Activated naive CD4-positive, alpha-beta T cell treated with anti-CD3 and anti-CD28 coated beads for 36 hours (primary cell): ENCODE measurements at regions of chr1 and their contacts with region 1.

Region 1: DNA sequence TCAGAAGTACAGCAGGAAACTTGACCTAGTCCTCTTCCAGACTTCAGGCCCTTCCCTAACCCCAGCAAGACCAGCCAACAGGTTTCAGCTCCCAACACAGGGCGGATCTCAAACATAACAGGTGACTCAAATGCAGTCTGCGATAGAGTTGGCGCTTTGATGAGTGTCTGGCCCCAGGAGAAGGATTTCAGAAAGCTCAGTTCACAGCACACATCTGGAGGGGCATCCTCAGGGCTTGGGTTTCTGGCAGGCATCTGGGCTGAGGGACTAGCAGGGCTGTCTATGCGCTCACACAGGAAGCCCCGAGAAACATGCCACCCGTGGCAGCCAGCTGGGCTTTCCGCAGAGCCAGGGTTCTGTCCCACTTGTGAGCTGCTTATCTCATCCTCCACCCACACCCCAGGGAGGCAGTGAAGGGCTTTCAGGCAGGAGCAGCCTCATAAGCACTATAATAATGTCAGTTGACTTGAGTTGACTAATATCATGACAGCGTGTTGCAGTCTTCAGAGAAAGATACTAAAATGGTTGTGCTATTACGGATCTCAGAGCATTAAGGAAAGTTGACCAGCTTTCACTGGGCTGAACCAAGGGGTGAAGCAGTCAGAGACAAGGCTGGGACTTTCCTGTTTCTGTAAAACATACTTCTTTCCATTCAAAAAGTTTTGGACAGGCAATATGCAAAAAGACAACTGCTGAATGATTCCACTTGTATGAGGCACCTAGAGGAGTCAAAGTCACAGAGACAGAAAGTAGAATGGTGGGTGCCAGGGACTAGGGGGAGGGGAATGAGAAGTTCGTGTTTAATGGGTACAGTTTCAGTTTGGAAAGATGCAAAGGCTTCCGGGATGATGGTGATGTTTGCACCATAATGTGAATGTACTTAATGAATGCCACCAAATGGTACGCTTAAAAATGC is 233.0 kb upstream of the IRF2BP2 start:
- DNase-seq: peak; percentile 95
- H3K4me3 Mint-ChIP-seq: peak overlapping the region; percentile 62
- H3K27ac Mint-ChIP-seq: peak overlapping the region; percentile 96
- H3K4me1 Mint-ChIP-seq: peaks cover 85% of the 10 kb centered on the region
- H3K27me3 Mint-ChIP-seq: no peaks in the 10 kb centered on the region

Region 2: DNA sequence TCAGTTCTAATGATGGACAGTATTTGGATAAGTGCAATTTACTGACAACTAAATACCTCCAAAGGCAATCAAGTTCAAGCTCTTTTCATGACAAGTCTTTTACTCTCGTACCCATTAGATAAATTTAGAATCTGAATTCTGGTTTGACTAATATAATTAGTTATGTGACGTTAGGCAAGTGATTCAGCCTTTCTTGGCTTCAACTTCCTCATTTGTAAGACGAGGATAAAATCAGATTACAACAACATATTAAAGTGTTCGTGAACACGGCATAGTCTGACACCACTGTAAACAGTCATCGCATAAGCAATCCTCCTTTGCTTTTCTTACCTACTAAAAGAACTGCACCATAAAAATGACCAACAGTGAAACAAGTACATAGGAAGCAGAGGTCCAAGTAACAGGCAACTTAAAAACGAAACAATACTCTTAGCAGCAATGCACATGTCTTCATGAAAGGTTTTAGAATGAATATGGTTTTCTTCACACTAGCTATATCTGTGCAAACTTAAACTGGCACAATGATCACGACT is 444.1 kb before region 1 on chr1:
- CTCF ChIA-PET with region 1: no interaction called
- intact Hi-C with region 1: loop called (anchors 10 kb)
- DNase-seq: peak; percentile 23
- H3K4me3 Mint-ChIP-seq: peak overlapping the region; percentile 60
- H3K27ac Mint-ChIP-seq: peak overlapping the region; percentile 91
- H3K4me1 Mint-ChIP-seq: peaks cover 58% of the 10 kb centered on the region
- H3K27me3 Mint-ChIP-seq: no peaks in the 10 kb centered on the region

Region 3: GRCh38 chr1:234599617-234600417 is 243.2 kb before region 1 on chr1:
- CTCF ChIA-PET with region 1: no interaction called
- intact Hi-C with region 1: loop called (anchors 1 kb)
- DNase-seq: peak; percentile 74
- H3K4me3 Mint-ChIP-seq: peak overlapping the region; percentile 83
- H3K27ac Mint-ChIP-seq: peak overlapping the region; percentile 99
- H3K4me1 Mint-ChIP-seq: peaks cover 50% of the 10 kb centered on the region
- H3K27me3 Mint-ChIP-seq: no peaks in the 10 kb centered on the region

Region 4: DNA sequence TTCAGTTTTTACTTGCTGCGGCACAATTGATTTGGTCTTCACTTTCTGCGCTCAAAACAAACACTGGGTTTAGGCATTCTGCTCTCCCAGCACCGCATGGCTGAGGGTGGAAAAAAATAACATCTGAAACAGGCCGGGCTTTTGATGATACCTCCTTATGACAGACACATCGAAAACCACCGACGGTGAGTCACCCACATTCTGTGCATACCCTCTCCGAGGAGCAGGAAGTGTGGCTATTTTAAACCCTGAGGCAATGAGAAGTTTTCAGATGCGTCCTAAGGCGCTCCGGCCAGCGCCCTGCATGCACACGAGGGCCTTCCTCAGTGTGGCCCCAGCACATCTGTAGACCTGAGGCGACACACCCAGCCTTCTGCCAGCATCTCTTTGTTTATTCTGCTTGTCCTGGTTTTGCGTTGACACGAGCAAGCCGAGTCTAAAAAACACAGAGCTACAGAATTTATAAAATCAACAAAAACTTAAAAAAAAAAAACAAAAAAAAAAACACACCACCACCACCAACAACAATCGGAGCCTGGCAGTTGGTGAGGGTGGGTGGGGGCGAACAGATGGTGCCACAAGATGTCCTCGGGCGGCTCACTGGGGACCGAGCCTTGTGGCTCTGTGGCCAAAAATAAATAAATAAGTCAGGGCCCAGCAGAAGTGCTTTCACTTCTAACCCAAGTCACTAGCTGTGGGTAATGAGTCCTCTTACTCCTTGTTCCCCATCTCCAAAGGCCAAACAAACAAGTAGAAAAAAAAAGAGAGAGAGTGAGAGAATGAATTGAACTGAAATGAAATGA is 70.4 kb before region 1 on chr1:
- CTCF ChIA-PET with region 1: interaction called, 4 read pairs
- intact Hi-C with region 1: loop called (anchors 1 kb)
- DNase-seq: peak; percentile 97
- H3K4me3 Mint-ChIP-seq: peak overlapping the region; percentile 61
- H3K27ac Mint-ChIP-seq: peak overlapping the region; percentile 92
- H3K4me1 Mint-ChIP-seq: peaks cover 59% of the 10 kb centered on the region
- H3K27me3 Mint-ChIP-seq: no peaks in the 10 kb centered on the region

Region 5: DNA sequence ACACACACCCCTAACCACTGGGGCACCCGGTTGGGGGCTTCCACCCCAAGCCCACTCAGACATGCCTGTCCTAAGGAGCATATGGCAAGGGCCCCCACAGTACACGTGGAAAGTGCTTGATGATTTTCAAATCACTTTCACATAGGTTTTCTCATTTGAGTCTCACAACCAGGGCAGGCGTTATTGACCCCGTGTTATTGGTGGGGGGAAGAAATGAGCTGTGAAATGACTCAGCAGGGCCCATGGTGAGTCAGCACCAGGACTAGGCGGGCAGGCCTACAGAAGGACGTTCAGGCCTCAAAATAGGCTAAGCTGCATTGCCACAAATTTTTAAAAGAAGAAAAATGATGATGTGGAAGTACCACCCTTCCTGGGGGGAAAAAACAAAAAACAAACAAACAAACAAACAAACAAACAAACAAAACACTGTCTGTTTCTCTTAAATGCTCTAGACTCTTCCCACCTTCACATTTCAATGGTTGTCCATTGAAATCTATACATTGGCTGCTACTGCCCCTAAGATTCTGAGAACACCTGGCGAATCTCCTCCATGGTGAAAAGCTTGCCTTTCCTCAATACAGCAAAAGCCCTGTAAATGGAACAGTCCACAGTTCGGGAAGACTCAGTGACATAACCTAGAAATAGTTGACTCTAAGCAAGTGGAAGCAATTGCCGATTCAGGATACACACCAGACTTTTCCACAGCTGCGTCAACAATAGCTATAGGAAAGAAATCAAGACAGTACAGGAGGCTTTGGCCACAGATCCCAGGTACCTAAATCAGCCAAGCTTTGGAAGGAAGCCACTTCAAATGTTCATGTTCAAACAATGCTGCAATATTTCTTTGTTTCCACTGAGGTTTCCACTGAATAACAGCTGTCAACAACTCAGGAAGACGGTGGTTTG is 51.0 kb after region 1 on chr1:
- CTCF ChIA-PET with region 1: no interaction called
- intact Hi-C with region 1: no loop called
- DNase-seq: peak; percentile 46
- H3K4me3 Mint-ChIP-seq: no peak overlapping the region
- H3K27ac Mint-ChIP-seq: no peak overlapping the region
- H3K4me1 Mint-ChIP-seq: peaks cover 15% of the 10 kb centered on the region
- H3K27me3 Mint-ChIP-seq: no peaks in the 10 kb centered on the region

Region 6: GRCh38 chr1:234933475-234933874 is 90.5 kb after region 1 on chr1:
- CTCF ChIA-PET with region 1: interaction called, 4 read pairs
- intact Hi-C with region 1: loop called (anchors 1 kb)
- DNase-seq: peak; percentile 61
- H3K4me3 Mint-ChIP-seq: no peak overlapping the region
- H3K27ac Mint-ChIP-seq: peak overlapping the region; percentile 84
- H3K4me1 Mint-ChIP-seq: peaks cover 58% of the 10 kb centered on the region
- H3K27me3 Mint-ChIP-seq: no peaks in the 10 kb centered on the region

Region 7: GRCh38 chr1:235075188-235075926 is 232.4 kb after region 1 on chr1:
- CTCF ChIA-PET with region 1: no interaction called
- intact Hi-C with region 1: loop called (anchors 1 kb)
- DNase-seq: peak; percentile 83
- H3K4me3 Mint-ChIP-seq: peak overlapping the region; percentile 0
- H3K27ac Mint-ChIP-seq: peak overlapping the region; percentile 90
- H3K4me1 Mint-ChIP-seq: peaks cover 36% of the 10 kb centered on the region
- H3K27me3 Mint-ChIP-seq: no peaks in the 10 kb centered on the region